ENCODE measurements at regions of chr1 and their contacts with region 1.

Region 1: GRCh38 chr1:209827384-209828262 is at the start of gene UTP25:
- DNase-seq: peak; percentile 96
- ATAC-seq: peak; percentile 93
- H3K4me3 ChIP-seq: peak within 1 kb of the TSS; percentile 58 to 98 (median 75)
- H3K4me3 Mint-ChIP-seq: peak within 1 kb of the TSS; percentile 83
- H3K27ac ChIP-seq: peak within 1 kb of the TSS; percentile 39 to 70
- H3K27ac Mint-ChIP-seq: peak within 1 kb of the TSS; percentile 77
- H3K4me1 ChIP-seq: peaks cover 17 to 23% of the 10 kb centered on the region in 2 donors
- H3K4me1 Mint-ChIP-seq: peaks cover 29% of the 10 kb centered on the region
- H3K27me3 ChIP-seq: peaks cover 0 to 6% (median 0%) of the 10 kb centered on the region in 4 experiments
- H3K27me3 Mint-ChIP-seq: peaks cover 7% of the 10 kb centered on the region
- CTCF ChIP-seq: peak; percentile 76
- total RNA-seq, gene UTP25: 16.6 and 17.1 TPM in 2 replicates

Region 2: GRCh38 chr1:209130886-209131285 is 696.7 kb before region 1 on chr1:
- CTCF ChIA-PET with region 1: no interaction called
- POLR2A ChIA-PET with region 1: no interaction called
- intact Hi-C with region 1: no loop called
- DNase-seq: no peak
- ATAC-seq: no peak
- H3K4me3 ChIP-seq: no peak overlapping the region
- H3K4me3 Mint-ChIP-seq: no peak overlapping the region
- H3K27ac ChIP-seq: no peak overlapping the region
- H3K27ac Mint-ChIP-seq: no peak overlapping the region
- H3K4me1 ChIP-seq: no peaks in the 10 kb centered on the region
- H3K4me1 Mint-ChIP-seq: no peaks in the 10 kb centered on the region
- H3K27me3 ChIP-seq: no peaks in the 10 kb centered on the region
- H3K27me3 Mint-ChIP-seq: no peaks in the 10 kb centered on the region
- CTCF ChIP-seq: no peak

Region 3: DNA sequence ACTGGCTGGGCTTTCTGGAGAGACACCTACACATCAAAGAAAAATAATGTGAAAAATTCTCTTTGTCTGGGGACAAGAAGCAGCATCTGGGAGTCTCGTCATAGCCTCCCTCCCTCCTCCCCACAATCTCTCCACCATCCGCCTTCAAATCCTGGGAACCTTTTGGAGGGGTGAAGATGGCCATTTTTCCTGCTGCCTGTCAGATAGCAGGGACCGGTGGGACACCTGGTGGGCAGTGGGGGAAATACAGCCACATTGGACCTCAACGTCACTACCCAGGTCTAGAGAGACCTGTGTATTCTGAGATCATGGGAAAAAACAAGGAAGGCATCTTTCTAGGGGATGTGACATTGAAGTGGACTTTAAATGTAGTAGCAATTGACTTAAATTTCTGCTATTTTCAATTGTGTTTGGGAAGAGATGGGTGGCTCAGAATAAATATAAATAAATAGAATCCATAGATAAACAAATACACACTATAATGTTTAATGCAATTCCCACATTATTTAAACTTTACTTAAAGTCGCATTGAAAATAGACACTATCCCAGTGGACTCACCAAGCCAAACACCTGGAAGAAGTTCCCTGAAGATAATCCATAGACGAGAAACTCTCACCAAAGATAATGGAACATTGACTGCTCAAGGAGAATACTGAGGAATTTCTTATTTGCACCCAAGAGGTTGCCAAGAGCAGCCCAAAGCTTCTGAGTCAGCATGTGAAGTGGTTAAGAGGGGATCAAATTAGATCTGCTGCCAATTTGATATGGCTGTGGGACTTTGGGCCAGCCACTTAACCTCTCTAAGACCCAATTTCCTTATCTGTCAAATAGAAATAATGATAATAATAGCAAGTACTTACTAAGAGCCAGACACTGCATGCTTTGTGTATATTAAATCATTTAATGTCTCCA is 391.7 kb before region 1 on chr1:
- CTCF ChIA-PET with region 1: no interaction called
- POLR2A ChIA-PET with region 1: no interaction called
- intact Hi-C with region 1: no loop called
- DNase-seq: peak; percentile 20
- ATAC-seq: no peak
- H3K4me3 ChIP-seq: no peak overlapping the region
- H3K4me3 Mint-ChIP-seq: no peak overlapping the region
- H3K27ac ChIP-seq: no peak overlapping the region
- H3K27ac Mint-ChIP-seq: no peak overlapping the region
- H3K4me1 ChIP-seq: no peaks in the 10 kb centered on the region
- H3K4me1 Mint-ChIP-seq: no peaks in the 10 kb centered on the region
- H3K27me3 ChIP-seq: peaks cover 0 to 2% (median 0%) of the 10 kb centered on the region in 4 experiments
- H3K27me3 Mint-ChIP-seq: peaks cover 23% of the 10 kb centered on the region
- CTCF ChIP-seq: peak; percentile 64

Region 4: GRCh38 chr1:209747580-209748262 is 79.9 kb before region 1 on chr1:
- CTCF ChIA-PET with region 1: interaction called, 14 read pairs
- POLR2A ChIA-PET with region 1: no interaction called
- intact Hi-C with region 1: no loop called
- DNase-seq: peak; percentile 88
- ATAC-seq: peak; percentile 98
- H3K4me3 ChIP-seq: peak overlapping the region in 4 of 5 experiments; percentile 37 to 56 (median 52)
- H3K4me3 Mint-ChIP-seq: peak overlapping the region; percentile 84
- H3K27ac ChIP-seq: peak overlapping the region; percentile 44 to 50
- H3K27ac Mint-ChIP-seq: peak overlapping the region; percentile 75
- H3K4me1 ChIP-seq: peaks cover 29 to 33% of the 10 kb centered on the region in 2 donors
- H3K4me1 Mint-ChIP-seq: peaks cover 35% of the 10 kb centered on the region
- H3K27me3 ChIP-seq: no peaks in the 10 kb centered on the region
- H3K27me3 Mint-ChIP-seq: no peaks in the 10 kb centered on the region
- CTCF ChIP-seq: peak; percentile 98

Region 5: GRCh38 chr1:209769171-209769904 is 58.3 kb before region 1 on chr1:
- CTCF ChIA-PET with region 1: interaction called, 11 read pairs
- POLR2A ChIA-PET with region 1: no interaction called
- intact Hi-C with region 1: loop called (anchors 5 kb)
- DNase-seq: peak; percentile 47
- ATAC-seq: peak; percentile 57
- H3K4me3 ChIP-seq: peak overlapping the region; percentile 58 to 83 (median 68)
- H3K4me3 Mint-ChIP-seq: no peak overlapping the region
- H3K27ac ChIP-seq: peak overlapping the region; percentile 57 to 87
- H3K27ac Mint-ChIP-seq: no peak overlapping the region
- H3K4me1 ChIP-seq: peaks cover 65 to 80% of the 10 kb centered on the region in 2 donors
- H3K4me1 Mint-ChIP-seq: peaks cover 29% of the 10 kb centered on the region
- H3K27me3 ChIP-seq: no peaks in the 10 kb centered on the region
- H3K27me3 Mint-ChIP-seq: no peaks in the 10 kb centered on the region
- CTCF ChIP-seq: no peak

Region 6: GRCh38 chr1:209784265-209785169 is 43.1 kb before region 1 on chr1 and contains the start of gene C1orf74:
- CTCF ChIA-PET with region 1: interaction called, 31 read pairs
- POLR2A ChIA-PET with region 1: interaction called, 3 read pairs
- intact Hi-C with region 1: loop called (anchors 1 kb)
- DNase-seq: peak; percentile 99
- ATAC-seq: peak; percentile 98
- H3K4me3 ChIP-seq: peak within 1 kb of the TSS; percentile 54 to 90 (median 79)
- H3K4me3 Mint-ChIP-seq: peak within 1 kb of the TSS; percentile 92
- H3K27ac ChIP-seq: peak within 1 kb of the TSS; percentile 86 to 90
- H3K27ac Mint-ChIP-seq: peak within 1 kb of the TSS; percentile 95
- H3K4me1 ChIP-seq: peaks cover 14 to 20% of the 10 kb centered on the region in 2 donors
- H3K4me1 Mint-ChIP-seq: peaks cover 25% of the 10 kb centered on the region
- H3K27me3 ChIP-seq: peaks cover 0 to 12% (median 1%) of the 10 kb centered on the region in 4 experiments
- H3K27me3 Mint-ChIP-seq: peaks cover 4% of the 10 kb centered on the region
- CTCF ChIP-seq: no peak
- total RNA-seq, gene C1orf74: 3.4 and 4.1 TPM in 2 replicates

Region 7: GRCh38 chr1:209815931-209816341 is 11.7 kb before region 1 on chr1:
- CTCF ChIA-PET with region 1: interaction called, 45 read pairs
- POLR2A ChIA-PET with region 1: no interaction called
- intact Hi-C with region 1: no loop called
- DNase-seq: no peak
- ATAC-seq: no peak
- H3K4me3 ChIP-seq: no peak overlapping the region
- H3K4me3 Mint-ChIP-seq: no peak overlapping the region
- H3K27ac ChIP-seq: no peak overlapping the region
- H3K27ac Mint-ChIP-seq: no peak overlapping the region
- H3K4me1 ChIP-seq: no peaks in the 10 kb centered on the region
- H3K4me1 Mint-ChIP-seq: no peaks in the 10 kb centered on the region
- H3K27me3 ChIP-seq: peaks cover 0 to 6% (median 4%) of the 10 kb centered on the region in 4 experiments
- H3K27me3 Mint-ChIP-seq: peaks cover 27% of the 10 kb centered on the region
- CTCF ChIP-seq: no peak

Region 8: GRCh38 chr1:209884665-209885117 is 57.1 kb after region 1 on chr1:
- CTCF ChIA-PET with region 1: no interaction called
- POLR2A ChIA-PET with region 1: no interaction called
- intact Hi-C with region 1: no loop called
- DNase-seq: no peak
- ATAC-seq: peak; percentile 51
- H3K4me3 ChIP-seq: no peak overlapping the region
- H3K4me3 Mint-ChIP-seq: no peak overlapping the region
- H3K27ac ChIP-seq: no peak overlapping the region
- H3K27ac Mint-ChIP-seq: no peak overlapping the region
- H3K4me1 ChIP-seq: no peaks in the 10 kb centered on the region
- H3K4me1 Mint-ChIP-seq: no peaks in the 10 kb centered on the region
- H3K27me3 ChIP-seq: peaks cover 0 to 5% (median 2%) of the 10 kb centered on the region in 4 experiments
- H3K27me3 Mint-ChIP-seq: peaks cover 37% of the 10 kb centered on the region
- CTCF ChIP-seq: no peak

Region 9: GRCh38 chr1:210311726-210312493 is 484.3 kb after region 1 on chr1:
- CTCF ChIA-PET with region 1: interaction called, 3 read pairs
- POLR2A ChIA-PET with region 1: no interaction called
- intact Hi-C with region 1: loop called (anchors 1 kb)
- DNase-seq: no peak
- ATAC-seq: no peak
- H3K4me3 ChIP-seq: peak overlapping the region in 3 of 5 experiments; percentile 42 to 66 (median 55)
- H3K4me3 Mint-ChIP-seq: peak overlapping the region; percentile 85
- H3K27ac ChIP-seq: no peak overlapping the region
- H3K27ac Mint-ChIP-seq: no peak overlapping the region
- H3K4me1 ChIP-seq: peaks cover 3 to 13% of the 10 kb centered on the region in 2 donors
- H3K4me1 Mint-ChIP-seq: peaks cover 6% of the 10 kb centered on the region
- H3K27me3 ChIP-seq: peaks cover 0 to 2% (median 0%) of the 10 kb centered on the region in 4 experiments
- H3K27me3 Mint-ChIP-seq: peaks cover 17% of the 10 kb centered on the region
- CTCF ChIP-seq: no peak

Measured in B cell (primary cell).